Activated CD4-positive, alpha-beta memory T cell treated with anti-CD3 and anti-CD28 coated beads, Interleukin-2, amount 10 ng/mL, durations not matched to agents 7 days and 5 days (primary cell): ENCODE measurements at regions of chr19 and their contacts with region 1.

Region 1: GRCh38 chr19:39996811-39997594 is at the start of gene ZNF546:
- DNase-seq: peak; percentile 94
- H3K4me3 Mint-ChIP-seq: peak within 1 kb of the TSS; percentile 99
- H3K27ac Mint-ChIP-seq: peak within 1 kb of the TSS; percentile 94
- H3K4me1 Mint-ChIP-seq: peaks cover 36% of the 10 kb centered on the region
- H3K27me3 Mint-ChIP-seq: no peaks in the 10 kb centered on the region
- total RNA-seq, gene ZNF546: 6.3 to 7.5 TPM

Region 2: GRCh38 chr19:40035996-40036395 is 39.0 kb after region 1 on chr19:
- CTCF ChIA-PET with region 1: no interaction called
- POLR2A ChIA-PET with region 1: no interaction called
- DNase-seq: no peak
- H3K4me3 Mint-ChIP-seq: no peak overlapping the region
- H3K27ac Mint-ChIP-seq: no peak overlapping the region
- H3K4me1 Mint-ChIP-seq: no peaks in the 10 kb centered on the region
- H3K27me3 Mint-ChIP-seq: no peaks in the 10 kb centered on the region

Region 3: GRCh38 chr19:40055832-40056504 is 59.0 kb after region 1 on chr19 and contains the start of gene ZNF780B:
- CTCF ChIA-PET with region 1: no interaction called
- POLR2A ChIA-PET with region 1: interaction called, 10 read pairs
- DNase-seq: peak; percentile 82
- H3K4me3 Mint-ChIP-seq: peak within 1 kb of the TSS; percentile 99
- H3K27ac Mint-ChIP-seq: peak within 1 kb of the TSS; percentile 91
- H3K4me1 Mint-ChIP-seq: peaks cover 43% of the 10 kb centered on the region
- H3K27me3 Mint-ChIP-seq: peaks cover 17% of the 10 kb centered on the region
- total RNA-seq, gene ZNF780B: 19.9 to 20.1 TPM

Region 4: DNA sequence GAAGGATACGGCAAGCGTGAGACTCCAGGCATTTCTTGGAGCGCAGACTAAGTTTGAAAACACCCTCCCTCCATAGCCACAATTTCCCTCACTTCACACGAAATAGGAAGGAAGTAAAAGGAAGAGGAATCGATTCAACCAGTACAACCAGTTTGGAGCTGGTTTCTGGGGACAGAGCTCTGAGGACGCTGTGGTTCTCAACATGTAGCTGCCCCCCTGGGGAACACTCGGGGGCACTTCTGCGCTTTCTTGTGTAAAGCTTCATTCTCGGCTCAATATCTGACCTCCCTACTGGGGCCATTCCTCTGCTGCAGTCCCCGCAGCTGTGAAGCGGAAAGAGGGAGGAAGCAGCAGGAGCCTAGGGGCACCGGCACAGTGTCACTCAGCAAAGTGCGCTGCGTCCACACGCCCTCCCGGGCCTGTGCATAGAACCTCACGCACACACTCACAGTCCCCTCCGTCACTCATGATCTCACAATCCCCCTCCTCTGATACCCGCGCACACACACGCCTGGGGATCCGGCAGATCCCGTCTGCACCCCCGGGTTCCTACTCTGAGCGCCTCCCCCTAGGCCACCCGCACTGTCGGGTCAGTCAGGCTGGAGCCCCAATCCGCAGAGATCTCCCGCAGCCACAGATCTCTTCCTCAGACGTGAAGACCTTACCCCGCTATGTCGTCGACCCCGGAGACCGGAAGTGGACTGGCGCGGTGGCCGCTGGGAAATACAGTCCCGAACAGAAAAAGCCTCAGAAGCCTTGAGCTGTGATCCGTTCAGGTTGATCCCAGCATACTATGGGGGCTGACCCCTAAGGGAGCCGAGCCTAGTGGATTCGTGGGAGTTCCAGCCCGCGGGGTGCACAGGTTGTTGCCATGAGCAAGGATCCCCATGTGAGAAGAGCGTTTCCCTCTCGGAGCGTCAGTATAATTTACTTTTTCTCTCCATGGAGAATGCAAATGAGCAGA is 93.5 kb after region 1 on chr19 and contains the start of gene ZNF780A:
- CTCF ChIA-PET with region 1: interaction called, 4 read pairs
- POLR2A ChIA-PET with region 1: interaction called, 12 read pairs
- DNase-seq: peak; percentile 82
- H3K4me3 Mint-ChIP-seq: peak within 1 kb of the TSS; percentile 100
- H3K27ac Mint-ChIP-seq: peak within 1 kb of the TSS; percentile 98
- H3K4me1 Mint-ChIP-seq: peaks cover 41% of the 10 kb centered on the region
- H3K27me3 Mint-ChIP-seq: peaks cover 2% of the 10 kb centered on the region
- total RNA-seq, gene ZNF780A: 21.3 to 25.3 TPM